ENCODE measurements at regions of chr11 and their contacts with region 1.

Region 1: GRCh38 chr11:68839054-68839865 is 2.5 kb downstream of the CPT1A start:
- DNase-seq: peak; percentile 91 to 96
- ATAC-seq: peak; percentile 67 to 73
- H3K4me3 ChIP-seq: peak overlapping the region; percentile 77 to 86 (median 82)
- H3K27ac ChIP-seq: peak overlapping the region; percentile 88 to 95 (median 92)
- H3K4me1 ChIP-seq: peaks cover 53 to 64% of the 10 kb centered on the region in 2 donors
- H3K27me3 ChIP-seq: no peaks in the 10 kb centered on the region
- CTCF ChIP-seq: peak in 1 of 5 experiments; percentile 17
- POLR2A ChIP-seq: peak; percentile 22 to 37

Region 2: DNA sequence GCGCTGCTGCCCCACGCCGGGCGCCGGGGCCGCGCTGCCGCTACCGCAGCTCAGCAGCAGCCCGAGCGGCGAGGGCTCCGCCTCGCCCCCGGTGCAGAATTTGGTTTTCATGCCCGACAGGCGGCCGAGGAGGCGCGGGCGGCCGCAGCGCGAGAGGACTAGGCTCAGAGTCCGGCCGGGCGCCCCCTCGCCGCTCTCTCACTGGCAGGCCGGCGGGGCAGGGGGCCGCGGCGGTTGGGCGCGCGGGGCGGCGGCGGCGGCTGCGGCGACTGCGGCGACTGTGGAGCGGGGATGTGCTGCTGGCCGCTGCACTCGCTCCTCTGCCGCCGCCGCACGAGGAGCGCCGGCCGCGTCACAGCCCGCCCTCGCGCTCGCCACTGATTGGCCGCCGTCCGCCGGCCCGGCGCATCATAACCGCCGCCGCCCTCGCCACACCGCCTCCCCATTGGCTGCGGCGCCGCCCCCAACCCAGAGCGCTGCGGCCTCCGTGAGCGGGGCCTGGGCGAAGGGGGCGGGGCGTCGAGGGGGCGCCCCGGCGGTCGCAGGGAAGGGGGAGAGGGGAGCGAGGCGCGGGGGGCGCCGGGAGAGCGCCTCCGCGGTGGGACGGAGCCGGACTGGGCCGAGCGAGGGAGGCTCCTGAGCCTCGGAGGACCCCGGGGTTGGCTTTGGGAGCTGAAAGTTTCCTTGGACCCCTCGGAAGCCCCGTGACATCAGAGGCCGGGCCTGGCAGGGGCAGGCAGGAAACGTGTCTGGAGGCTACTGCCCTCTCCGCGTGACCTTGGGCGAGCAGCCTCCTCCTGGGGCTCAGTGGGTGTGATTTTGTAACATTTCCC is 718.0 kb before region 1 on chr11 and contains the start of gene CHKA:
- in situ Hi-C with region 1: no loop called
- intact Hi-C with region 1: loop called (anchors 10 kb)
- DNase-seq: peak; percentile 88 to 91
- ATAC-seq: peak; percentile 85
- H3K4me3 ChIP-seq: peak within 1 kb of the TSS; percentile 59 to 71 (median 63)
- H3K27ac ChIP-seq: peak within 1 kb of the TSS; percentile 92 to 99 (median 94)
- H3K4me1 ChIP-seq: peaks cover 6 to 26% of the 10 kb centered on the region in 2 donors
- H3K27me3 ChIP-seq: no peaks in the 10 kb centered on the region
- CTCF ChIP-seq: no peak
- POLR2A ChIP-seq: peak; percentile 97 to 99
- total RNA-seq, gene CHKA: 7.3 to 20.9 (median 12.3) TPM

Region 3: DNA sequence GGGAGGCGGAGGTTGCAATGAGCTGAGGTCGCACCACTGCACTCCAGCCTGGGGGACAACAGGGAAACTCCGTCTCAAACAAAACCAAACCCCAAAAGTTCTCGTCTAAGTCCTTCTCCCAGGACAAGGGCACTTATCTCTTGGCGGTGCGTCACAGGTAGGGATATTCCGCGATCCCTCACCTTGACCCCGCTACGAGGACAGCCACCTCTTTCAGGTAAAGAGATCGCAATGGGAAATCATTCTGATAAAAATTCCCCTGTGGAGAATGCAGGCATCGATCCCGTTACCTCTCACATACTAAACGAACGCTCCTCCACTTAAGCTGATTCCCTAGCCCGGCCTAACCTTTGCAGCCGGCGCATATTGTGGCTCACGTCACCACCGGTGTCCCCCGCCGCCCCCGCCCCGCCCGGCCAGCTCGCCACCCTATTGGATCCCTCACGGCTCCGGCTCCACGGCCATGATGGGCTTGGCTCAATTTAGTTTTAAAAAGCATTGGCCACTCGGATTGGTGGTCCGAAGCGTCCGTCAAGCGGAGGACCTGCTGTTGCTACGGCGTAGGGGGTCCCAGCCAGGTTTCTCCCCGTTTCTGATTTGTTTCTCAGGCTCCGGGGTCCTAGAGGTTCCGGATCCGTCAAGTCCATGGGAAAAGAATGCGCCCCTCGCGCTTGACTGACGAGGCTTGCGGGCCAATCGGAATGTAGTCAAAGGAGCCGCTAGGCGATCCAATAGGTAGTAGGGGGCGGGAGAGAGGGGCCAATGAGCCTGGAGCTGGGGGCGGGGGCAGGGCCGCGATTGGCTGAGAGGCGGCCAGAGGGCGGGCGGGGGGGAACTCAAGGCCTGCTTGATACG is 379.1 kb before region 1 on chr11:
- in situ Hi-C with region 1: no loop called
- intact Hi-C with region 1: loop called (anchors 10 kb)
- DNase-seq: peak; percentile 97 to 98
- ATAC-seq: peak; percentile 88 to 89
- H3K4me3 ChIP-seq: peak overlapping the region; percentile 61 to 76 (median 68)
- H3K27ac ChIP-seq: peak overlapping the region; percentile 85 to 94 (median 90)
- H3K4me1 ChIP-seq: peaks cover 32 to 34% of the 10 kb centered on the region in 2 donors
- H3K27me3 ChIP-seq: no peaks in the 10 kb centered on the region
- CTCF ChIP-seq: no peak
- POLR2A ChIP-seq: no peak

Region 4: DNA sequence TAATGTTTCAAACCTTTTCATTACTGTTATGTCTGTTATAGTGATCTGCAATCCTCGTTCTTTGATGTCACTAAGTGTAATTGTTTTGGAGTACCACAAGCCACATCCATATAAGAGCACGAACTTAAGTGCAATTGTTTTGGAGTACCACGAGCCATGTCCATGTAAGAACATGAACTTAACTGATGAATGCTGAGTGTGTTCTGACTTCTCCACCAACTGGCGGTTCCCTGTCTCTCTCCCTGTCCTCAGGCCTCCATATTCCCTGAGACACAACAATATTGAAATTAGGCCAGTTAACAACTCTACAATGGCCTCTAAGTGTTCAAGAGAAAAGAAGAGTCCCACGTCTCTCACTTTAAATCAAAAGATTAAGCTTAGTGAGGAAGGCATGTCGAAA is 111.5 kb before region 1 on chr11:
- in situ Hi-C with region 1: no loop called
- intact Hi-C with region 1: no loop called
- DNase-seq: no peak
- ATAC-seq: no peak
- H3K4me3 ChIP-seq: no peak overlapping the region
- H3K27ac ChIP-seq: no peak overlapping the region
- H3K4me1 ChIP-seq: no peaks in the 10 kb centered on the region
- H3K27me3 ChIP-seq: peaks cover 0 to 7% (median 0%) of the 10 kb centered on the region in 3 donors
- CTCF ChIP-seq: no peak
- POLR2A ChIP-seq: no peak

Region 5: DNA sequence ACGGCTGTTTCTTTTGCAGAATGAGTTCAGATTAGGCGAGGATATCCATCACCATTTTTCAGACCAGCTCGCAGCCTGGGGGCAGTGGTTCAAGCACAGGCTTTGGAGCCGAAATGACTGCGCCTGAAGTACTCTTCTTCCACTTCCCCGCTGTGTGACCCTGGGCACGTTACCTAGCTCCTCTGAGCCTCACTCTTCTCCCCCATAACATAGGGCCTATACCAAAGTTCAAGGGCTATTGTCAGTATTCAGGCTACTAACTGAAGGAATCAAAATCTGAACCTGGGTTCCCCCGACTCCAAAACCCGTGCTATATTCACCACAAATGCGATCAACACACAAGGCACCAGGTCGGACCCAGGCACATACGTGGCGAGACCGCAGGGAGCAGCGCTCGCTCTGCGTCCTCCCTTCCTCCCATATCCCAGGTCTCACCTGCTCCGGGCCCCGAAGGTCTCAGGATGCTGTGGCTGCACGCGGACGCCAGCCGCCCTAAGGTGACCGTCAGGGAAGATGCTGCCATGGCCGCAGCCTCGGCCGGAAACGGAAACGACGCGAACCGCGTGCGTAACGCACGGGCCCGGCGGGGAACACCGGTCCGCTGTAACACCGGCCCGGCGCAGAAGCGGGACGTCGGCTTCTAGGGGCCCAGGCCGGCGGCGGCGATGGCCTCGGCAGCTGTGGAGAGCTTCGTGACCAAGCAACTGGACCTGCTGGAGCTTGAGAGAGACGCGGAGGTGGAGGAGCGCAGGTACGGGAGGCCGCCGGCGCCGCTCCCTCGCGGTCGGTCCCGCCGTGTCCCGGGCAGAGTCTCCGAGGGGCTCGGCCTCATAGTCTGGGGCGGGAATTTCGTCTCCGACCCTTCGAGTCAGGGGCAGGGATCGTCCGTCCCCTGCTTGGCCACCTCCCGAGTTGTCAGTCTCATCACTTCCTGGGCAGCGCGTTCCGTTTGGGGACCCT is 64.3 kb after region 1 on chr11 and contains the starts of genes IGHMBP2 and MRPL21:
- in situ Hi-C with region 1: no loop called
- intact Hi-C with region 1: loop called (anchors 5 kb)
- DNase-seq: peak; percentile 62 to 68
- ATAC-seq: peak; percentile 95
- H3K4me3 ChIP-seq: peak within 1 kb of the TSS; percentile 83 to 95 (median 88)
- H3K27ac ChIP-seq: peak within 1 kb of the TSS; percentile 82 to 88 (median 88)
- H3K4me1 ChIP-seq: peaks cover 20 to 28% of the 10 kb centered on the region in 2 donors
- H3K27me3 ChIP-seq: no peaks in the 10 kb centered on the region
- CTCF ChIP-seq: no peak
- POLR2A ChIP-seq: peak; percentile 62 to 69
- total RNA-seq, gene IGHMBP2: 15.5 to 22.3 (median 18.1) TPM
- total RNA-seq, gene MRPL21: 61.0 to 75.5 (median 64.6) TPM

Region 6: DNA sequence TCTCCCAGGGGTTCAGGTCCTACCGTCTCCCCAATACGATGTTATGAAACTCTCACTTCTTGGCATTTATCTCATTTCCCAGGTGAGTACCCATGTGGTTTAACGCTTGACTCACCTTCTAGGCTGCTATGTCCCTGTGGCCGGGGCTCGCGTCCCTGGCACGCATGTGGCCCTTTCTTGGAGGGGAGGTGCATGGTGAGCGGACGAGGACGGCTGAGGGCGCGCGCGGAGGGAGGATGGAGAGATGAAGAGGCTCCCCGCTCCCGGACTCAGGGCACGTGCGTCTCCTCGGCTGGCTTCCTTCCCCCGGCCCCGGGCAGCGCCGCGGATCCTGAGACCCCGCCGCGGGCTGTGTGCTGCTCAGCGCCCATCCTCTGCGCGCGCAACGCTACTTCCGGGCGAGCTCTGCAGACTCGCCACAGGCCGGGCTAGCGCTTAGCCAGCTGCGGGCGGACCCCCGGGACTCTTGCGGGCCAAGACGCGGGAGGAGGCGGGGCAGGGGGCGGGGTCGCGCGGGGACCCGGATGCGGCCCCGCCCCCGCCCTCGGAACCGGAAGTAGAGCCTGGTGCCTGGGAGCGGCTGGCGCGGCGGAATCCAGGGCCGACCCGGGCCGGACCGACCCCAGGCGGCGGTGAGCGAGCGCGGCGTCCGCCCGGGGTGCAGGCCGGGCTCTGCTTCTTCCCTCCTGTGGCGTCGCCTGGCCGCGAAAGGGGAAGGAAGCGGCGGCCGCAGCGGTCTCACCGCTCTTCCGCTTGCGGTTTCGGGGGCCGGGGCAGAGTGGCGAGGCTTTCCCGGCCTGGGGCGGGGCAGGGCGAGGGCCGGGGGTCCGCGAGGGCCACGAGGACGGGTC is 1558.9 kb after region 1 on chr11 and contains the start of gene CTTN:
- in situ Hi-C with region 1: no loop called
- intact Hi-C with region 1: loop called (anchors 5 kb)
- DNase-seq: peak; percentile 56 to 76
- ATAC-seq: peak; percentile 67 to 72
- H3K4me3 ChIP-seq: peak within 1 kb of the TSS; percentile 78 to 99 (median 89)
- H3K27ac ChIP-seq: peak within 1 kb of the TSS; percentile 90 to 97 (median 95)
- H3K4me1 ChIP-seq: peaks cover 24 to 30% of the 10 kb centered on the region in 2 donors
- H3K27me3 ChIP-seq: no peaks in the 10 kb centered on the region
- CTCF ChIP-seq: no peak
- POLR2A ChIP-seq: peak; percentile 95 to 96
- total RNA-seq, gene CTTN: 92.8 to 226 (median 134) TPM